IMR-90 (cell line): ENCODE measurements at regions of chr16 and their contacts with region 1.

Region 1: GRCh38 chr16:86466696-86467406 is 43.5 kb upstream of the FOXF1 start:
- DNase-seq: peak; percentile 88
- ATAC-seq: no peak
- H3K4me3 ChIP-seq: no peak overlapping the region
- H3K27ac ChIP-seq: peak overlapping the region; percentile 46
- H3K4me1 ChIP-seq: peaks cover 17% of the 10 kb centered on the region
- H3K27me3 ChIP-seq: no peaks in the 10 kb centered on the region
- CTCF ChIP-seq: no peak
- POLR2A ChIP-seq: no peak
- RAD21 ChIP-seq: no peak

Region 2: DNA sequence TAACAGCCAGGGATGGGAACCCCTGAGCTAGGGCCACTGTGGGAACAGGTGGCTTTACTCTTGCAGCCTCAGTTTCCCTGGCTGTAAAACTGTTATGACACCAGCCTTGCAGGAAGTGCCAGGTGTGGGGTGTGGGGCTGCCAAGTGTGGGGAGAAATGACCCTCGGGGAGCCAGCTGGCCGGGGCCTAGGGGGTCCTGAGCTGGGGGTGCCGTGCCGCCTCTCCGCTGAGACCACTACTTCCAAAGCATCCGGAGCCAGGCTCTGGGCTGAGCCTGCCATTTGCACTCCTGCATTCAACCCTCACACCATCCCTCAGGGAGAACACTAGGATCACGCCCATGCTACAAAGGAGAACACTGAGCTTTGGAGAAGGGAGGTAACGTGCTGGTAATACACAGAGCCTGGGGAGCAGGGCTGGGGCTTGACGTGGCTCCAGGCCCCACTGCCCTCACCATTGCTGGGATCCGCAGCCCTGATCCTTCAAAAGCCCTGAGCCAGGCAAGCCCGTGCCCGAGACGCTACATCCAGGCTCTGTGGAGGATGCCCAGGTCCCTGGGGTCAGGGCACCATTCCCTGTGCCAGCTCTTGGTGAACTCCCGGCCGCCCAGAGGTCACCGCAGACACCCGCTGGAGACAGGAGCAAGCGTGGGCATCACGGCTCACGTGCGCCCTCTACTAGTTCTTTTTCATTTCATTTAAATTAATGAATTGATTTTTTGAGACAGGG is 749.3 kb before region 1 on chr16:
- CTCF ChIA-PET with region 1: no interaction called
- POLR2A ChIA-PET with region 1: no interaction called
- dilution Hi-C with region 1: no loop called
- in situ Hi-C with region 1: no loop called
- intact Hi-C with region 1: no loop called
- DNase-seq: peak; percentile 47
- ATAC-seq: peak; percentile 75
- H3K4me3 ChIP-seq: no peak overlapping the region
- H3K27ac ChIP-seq: no peak overlapping the region
- H3K4me1 ChIP-seq: peaks cover 3% of the 10 kb centered on the region; the same call in 1 of the 2 replicates
- H3K27me3 ChIP-seq: no peaks in the 10 kb centered on the region; the same call in 1 of the 2 replicates
- CTCF ChIP-seq: peak; percentile 71
- POLR2A ChIP-seq: no peak
- RAD21 ChIP-seq: peak; percentile 68

Region 3: GRCh38 chr16:86403541-86404163 is 63.2 kb before region 1 on chr16:
- CTCF ChIA-PET with region 1: no interaction called
- POLR2A ChIA-PET with region 1: interaction called, 12 read pairs
- dilution Hi-C with region 1: no loop called
- in situ Hi-C with region 1: no loop called
- intact Hi-C with region 1: no loop called
- DNase-seq: no peak
- ATAC-seq: no peak
- H3K4me3 ChIP-seq: no peak overlapping the region
- H3K27ac ChIP-seq: no peak overlapping the region
- H3K4me1 ChIP-seq: peaks cover 23% of the 10 kb centered on the region
- H3K27me3 ChIP-seq: no peaks in the 10 kb centered on the region
- CTCF ChIP-seq: no peak
- POLR2A ChIP-seq: no peak
- RAD21 ChIP-seq: no peak